Activated naive CD8-positive, alpha-beta T cell treated with anti-CD3 and anti-CD28 coated beads, Interleukin-2, amount 10 ng/mL, durations not matched to agents 7 days and 5 days (primary cell): ENCODE measurements at regions of chr12 and their contacts with region 1.

Region 1: GRCh38 chr12:124917135-124917840 is 2.8 kb upstream of the UBC start:
- DNase-seq: peak; percentile 83
- ATAC-seq: peak; percentile 74
- H3K4me3 Mint-ChIP-seq: peak overlapping the region; percentile 100
- H3K27ac Mint-ChIP-seq: peak overlapping the region; percentile 100
- H3K4me1 Mint-ChIP-seq: peaks cover 74% of the 10 kb centered on the region
- H3K27me3 Mint-ChIP-seq: no peaks in the 10 kb centered on the region

Region 2: GRCh38 chr12:124856234-124857178 is 60.8 kb before region 1 on chr12:
- POLR2A ChIA-PET with region 1: no interaction called
- DNase-seq: no peak
- ATAC-seq: no peak
- H3K4me3 Mint-ChIP-seq: no peak overlapping the region
- H3K27ac Mint-ChIP-seq: peak overlapping the region; percentile 1
- H3K4me1 Mint-ChIP-seq: peaks cover 16% of the 10 kb centered on the region
- H3K27me3 Mint-ChIP-seq: no peaks in the 10 kb centered on the region

Region 3: GRCh38 chr12:124872068-124872719 is 45.1 kb before region 1 on chr12:
- POLR2A ChIA-PET with region 1: no interaction called
- DNase-seq: no peak
- ATAC-seq: no peak
- H3K4me3 Mint-ChIP-seq: no peak overlapping the region
- H3K27ac Mint-ChIP-seq: no peak overlapping the region
- H3K4me1 Mint-ChIP-seq: peaks cover 12% of the 10 kb centered on the region
- H3K27me3 Mint-ChIP-seq: peaks cover 21% of the 10 kb centered on the region

Region 4: GRCh38 chr12:124906606-124907261 is 10.6 kb before region 1 on chr12:
- POLR2A ChIA-PET with region 1: interaction called, 13 read pairs
- DNase-seq: peak; percentile 63
- ATAC-seq: peak; percentile 71
- H3K4me3 Mint-ChIP-seq: peak overlapping the region; percentile 20
- H3K27ac Mint-ChIP-seq: peak overlapping the region; percentile 47
- H3K4me1 Mint-ChIP-seq: peaks cover 21% of the 10 kb centered on the region
- H3K27me3 Mint-ChIP-seq: no peaks in the 10 kb centered on the region

Region 5: GRCh38 chr12:124927201-124928094 is 10.2 kb after region 1 on chr12:
- POLR2A ChIA-PET with region 1: interaction called, 45 read pairs
- DNase-seq: peak; percentile 95
- ATAC-seq: peak; percentile 85
- H3K4me3 Mint-ChIP-seq: peak overlapping the region; percentile 92
- H3K27ac Mint-ChIP-seq: peak overlapping the region; percentile 90
- H3K4me1 Mint-ChIP-seq: peaks cover 25% of the 10 kb centered on the region
- H3K27me3 Mint-ChIP-seq: peaks cover 2% of the 10 kb centered on the region

Region 6: DNA sequence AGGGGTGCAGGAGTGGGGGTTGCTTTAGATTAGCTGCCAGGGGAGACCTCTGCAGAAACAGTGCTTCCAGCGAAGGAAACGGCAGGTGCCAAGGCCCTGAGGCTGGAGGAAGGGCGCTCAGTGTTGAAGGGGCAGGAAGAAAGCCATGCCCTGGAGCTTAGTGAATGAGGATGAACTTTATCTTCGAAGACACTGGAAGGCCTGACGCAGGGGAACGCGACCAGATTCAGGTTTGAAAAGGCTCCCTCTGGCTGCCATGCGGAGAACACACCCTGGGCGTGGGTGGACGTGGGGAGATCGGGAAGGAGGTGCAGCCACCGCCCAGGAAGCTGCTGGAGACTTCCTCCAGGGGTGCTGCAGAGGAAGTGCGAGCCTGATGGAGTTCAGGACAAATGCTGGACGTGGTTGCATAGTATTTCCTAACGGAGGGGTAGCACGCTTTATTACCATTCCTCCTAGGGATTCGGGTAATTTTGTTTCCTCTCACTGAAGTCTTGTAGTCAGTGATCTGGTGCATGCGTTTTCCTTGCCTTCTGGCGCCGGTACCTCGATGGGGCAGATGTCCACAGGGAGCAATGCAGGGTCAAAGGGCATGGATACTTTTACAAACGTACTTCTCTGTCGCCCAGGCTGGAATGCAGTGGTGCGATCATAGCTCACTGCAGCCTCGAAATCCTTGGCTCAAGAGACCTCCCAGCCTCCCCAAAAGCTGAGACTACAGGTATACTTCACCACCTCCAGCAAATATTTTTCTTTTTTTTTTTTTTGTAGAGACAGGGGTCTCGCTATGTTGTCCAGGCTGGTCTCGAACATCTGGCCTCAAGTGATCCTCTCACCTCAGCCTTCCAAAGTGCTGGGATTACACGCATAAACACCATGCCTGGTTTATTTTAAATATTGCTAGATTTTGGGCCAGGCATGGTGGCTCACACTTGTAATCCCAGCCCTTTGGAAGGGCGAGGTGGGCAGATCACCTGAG is 23.6 kb after region 1 on chr12:
- POLR2A ChIA-PET with region 1: interaction called, 318 read pairs
- DNase-seq: peak; percentile 80
- ATAC-seq: peak; percentile 53
- H3K4me3 Mint-ChIP-seq: no peak overlapping the region
- H3K27ac Mint-ChIP-seq: no peak overlapping the region
- H3K4me1 Mint-ChIP-seq: peaks cover 10% of the 10 kb centered on the region
- H3K27me3 Mint-ChIP-seq: no peaks in the 10 kb centered on the region